AG04449 (cell line): ENCODE measurements at regions of chr10 and their contacts with region 1.

Region 1: GRCh38 chr10:123994417-123995081 is 98.8 kb downstream of the CHST15 start:
- DNase-seq: peak; percentile 59
- H3K4me3 ChIP-seq: peak overlapping the region; percentile 44
- CTCF ChIP-seq: peak; percentile 99

Region 2: DNA sequence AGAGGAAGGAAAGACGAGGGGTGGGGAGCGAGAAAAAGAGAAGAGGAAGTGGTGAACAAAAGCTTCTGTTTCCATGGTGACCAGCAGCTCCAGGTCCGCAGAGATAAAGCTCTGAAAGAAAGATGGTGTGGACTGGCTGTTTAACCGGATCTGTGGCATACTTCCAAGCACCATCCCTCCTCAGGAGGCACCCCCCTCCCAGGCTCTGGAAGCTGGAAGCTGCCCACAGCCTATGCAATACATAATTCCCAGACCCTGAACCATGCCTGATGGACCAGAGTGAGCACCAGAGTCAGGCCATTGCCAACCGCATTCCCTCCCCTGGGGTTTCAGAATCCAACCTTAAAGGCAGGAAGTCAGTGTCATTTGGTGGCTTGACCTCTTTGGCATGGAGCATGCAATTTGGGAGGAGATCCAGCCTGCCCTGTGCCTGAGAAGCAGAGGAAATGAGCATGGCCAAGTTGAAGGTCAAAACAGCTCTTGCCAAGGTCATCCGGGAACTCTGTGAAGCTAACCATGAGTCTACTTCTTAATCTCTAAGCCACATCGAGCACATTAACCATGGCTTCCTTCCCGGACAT is 80.8 kb before region 1 on chr10:
- CTCF ChIA-PET with region 1: no interaction called
- POLR2A ChIA-PET with region 1: no interaction called
- DNase-seq: no peak
- H3K4me3 ChIP-seq: no peak overlapping the region
- CTCF ChIP-seq: no peak

Region 3: DNA sequence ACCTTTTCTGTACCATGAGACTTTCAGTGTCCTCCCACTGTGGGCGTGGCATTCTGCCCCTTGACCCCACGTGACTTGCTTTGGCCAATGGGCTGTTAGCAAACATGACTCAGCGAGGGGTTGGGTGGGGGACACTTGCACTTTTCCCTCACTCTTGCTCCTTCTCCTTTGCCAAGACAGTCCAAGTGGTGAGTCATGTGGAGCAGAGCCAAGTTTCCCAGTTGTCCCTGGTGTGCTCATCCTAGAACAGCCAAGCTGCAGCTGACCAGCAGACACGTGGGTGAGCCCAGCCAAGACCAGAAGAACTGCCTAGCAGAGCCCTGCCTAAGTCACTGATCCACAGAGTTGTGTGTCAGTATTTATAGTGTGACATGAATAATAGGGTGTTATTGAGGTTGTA is 20.1 kb before region 1 on chr10:
- CTCF ChIA-PET with region 1: interaction called, 21 read pairs
- POLR2A ChIA-PET with region 1: no interaction called
- DNase-seq: no peak
- H3K4me3 ChIP-seq: no peak overlapping the region
- CTCF ChIP-seq: no peak

Region 4: DNA sequence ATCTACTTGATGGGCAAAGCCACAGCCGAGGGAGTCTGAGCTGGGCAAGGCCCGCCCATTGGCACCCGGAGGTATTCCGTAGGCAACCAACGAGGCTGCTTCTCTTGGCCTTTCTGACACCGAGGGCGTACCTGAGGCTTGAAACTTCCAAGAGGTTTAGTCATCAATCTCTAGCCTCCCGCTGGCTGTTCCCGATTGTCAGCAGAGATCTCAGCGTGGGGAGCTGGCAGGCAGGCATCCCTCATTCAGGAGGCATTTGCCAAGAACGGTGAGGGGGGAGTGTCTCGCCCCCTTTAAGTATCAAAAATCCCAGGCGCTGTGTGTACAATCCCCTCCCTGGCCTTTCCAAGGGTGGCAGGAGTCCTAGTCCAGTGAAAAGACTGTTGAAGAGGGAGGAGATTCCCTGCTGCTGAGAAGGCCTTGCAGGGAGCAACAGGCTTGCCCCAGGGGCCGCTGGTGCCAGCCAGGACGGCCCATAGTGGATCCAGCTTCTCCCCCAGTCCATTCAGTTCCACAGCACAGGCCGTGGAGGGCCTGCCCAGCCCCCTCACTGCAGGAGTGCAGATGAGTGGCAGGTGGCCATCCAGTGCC is 384.4 kb after region 1 on chr10:
- CTCF ChIA-PET with region 1: interaction called, 22 read pairs
- POLR2A ChIA-PET with region 1: no interaction called
- DNase-seq: no peak
- H3K4me3 ChIP-seq: no peak overlapping the region
- CTCF ChIP-seq: no peak

Region 5: GRCh38 chr10:124409696-124410095 is 415.1 kb after region 1 on chr10:
- CTCF ChIA-PET with region 1: interaction called, 80 read pairs
- POLR2A ChIA-PET with region 1: no interaction called
- DNase-seq: no peak
- H3K4me3 ChIP-seq: no peak overlapping the region
- CTCF ChIP-seq: no peak